ENCODE measurements at regions of chr14 and their contacts with region 1.

Region 1: DNA sequence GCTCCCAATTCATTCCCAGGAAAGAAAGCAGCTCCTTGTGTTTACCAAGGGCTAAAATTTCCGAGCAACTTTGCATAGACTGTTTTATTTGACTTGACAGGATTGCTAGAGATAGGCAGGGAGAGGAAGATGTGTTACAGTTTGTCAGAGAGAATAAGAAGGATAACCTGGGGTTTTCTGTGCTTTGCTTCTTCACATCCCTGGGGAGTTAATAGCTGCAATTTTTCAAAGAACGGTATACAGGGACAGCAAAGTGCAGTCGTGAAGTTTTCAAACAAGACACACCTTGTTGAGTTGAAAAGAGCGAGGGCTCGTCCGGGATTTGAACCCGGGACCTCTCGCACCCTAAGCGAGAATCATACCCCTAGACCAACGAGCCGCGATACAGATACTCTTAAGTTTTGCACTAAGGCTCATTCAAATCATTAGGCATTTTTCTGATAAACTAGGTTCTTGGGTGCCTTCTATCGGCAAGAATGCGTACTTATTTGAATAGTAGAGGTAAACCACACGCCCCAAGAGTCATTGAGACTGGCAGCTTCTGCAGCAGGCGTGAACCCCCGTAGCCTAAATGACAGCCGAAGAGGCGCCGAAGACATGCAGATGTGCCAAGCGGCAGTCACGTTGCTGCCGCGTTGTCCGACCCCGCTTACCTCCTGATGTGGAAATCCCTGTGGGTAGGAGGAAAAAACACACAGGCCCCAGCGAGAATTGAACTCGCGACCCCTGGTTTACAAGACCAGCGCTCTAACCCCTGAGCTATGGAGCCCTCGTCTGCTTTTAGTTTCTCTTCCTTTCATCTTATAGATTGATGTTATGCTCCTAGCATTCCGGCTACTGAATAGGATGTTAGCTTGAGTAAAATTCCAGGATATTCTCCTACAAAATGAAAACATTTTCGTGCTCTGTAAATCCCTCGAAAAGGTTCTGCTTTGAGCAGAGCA is 22.2 kb upstream of the RNASE12 start:
- DNase-seq: peak; percentile 90
- H3K4me3 Mint-ChIP-seq: no peak overlapping the region
- H3K27ac Mint-ChIP-seq: no peak overlapping the region
- H3K4me1 Mint-ChIP-seq: peaks cover 11% of the 10 kb centered on the region
- H3K27me3 Mint-ChIP-seq: no peaks in the 10 kb centered on the region

Region 2: DNA sequence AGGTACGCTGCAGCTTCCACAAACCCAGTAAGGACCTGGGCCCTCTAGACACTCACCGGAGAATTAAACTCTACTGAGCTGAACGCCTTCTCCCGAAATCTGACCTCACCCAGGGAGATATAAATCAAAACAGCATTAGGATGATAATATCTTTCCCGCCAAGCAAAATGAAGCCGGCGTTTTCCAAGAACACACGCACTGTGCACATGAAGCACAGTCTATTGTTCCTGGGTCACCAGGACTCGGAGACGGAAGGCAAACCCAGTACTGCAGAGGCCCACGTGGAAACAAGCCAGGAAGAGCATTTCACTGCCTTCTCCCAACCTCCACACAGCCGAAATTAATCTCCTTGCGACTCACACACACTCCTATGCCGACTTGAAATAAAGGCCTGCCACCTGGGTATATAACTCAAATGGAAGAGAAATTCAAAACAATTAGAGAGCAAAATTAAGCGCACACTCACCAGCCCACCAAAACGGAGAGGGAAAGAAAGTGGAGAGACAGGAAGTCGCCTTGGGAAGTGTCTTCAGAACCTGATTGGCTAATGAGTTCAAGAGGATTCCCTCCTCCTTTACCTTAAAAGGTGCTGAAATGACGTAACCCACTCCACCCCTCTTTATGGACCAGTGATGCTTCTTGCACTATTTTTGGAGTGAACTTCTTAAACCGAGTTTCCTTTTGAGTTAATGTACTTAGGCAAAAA is 280.4 kb before region 1 on chr14 and contains the start of gene CCNB1IP1:
- CTCF ChIA-PET with region 1: interaction called, 64 read pairs
- POLR2A ChIA-PET with region 1: no interaction called
- intact Hi-C with region 1: no loop called
- DNase-seq: peak; percentile 54
- H3K4me3 Mint-ChIP-seq: peak within 1 kb of the TSS; percentile 99
- H3K27ac Mint-ChIP-seq: peak within 1 kb of the TSS; percentile 92
- H3K4me1 Mint-ChIP-seq: peaks cover 36% of the 10 kb centered on the region
- H3K27me3 Mint-ChIP-seq: no peaks in the 10 kb centered on the region
- total RNA-seq, gene CCNB1IP1: 70.2 to 77.4 TPM

Region 3: DNA sequence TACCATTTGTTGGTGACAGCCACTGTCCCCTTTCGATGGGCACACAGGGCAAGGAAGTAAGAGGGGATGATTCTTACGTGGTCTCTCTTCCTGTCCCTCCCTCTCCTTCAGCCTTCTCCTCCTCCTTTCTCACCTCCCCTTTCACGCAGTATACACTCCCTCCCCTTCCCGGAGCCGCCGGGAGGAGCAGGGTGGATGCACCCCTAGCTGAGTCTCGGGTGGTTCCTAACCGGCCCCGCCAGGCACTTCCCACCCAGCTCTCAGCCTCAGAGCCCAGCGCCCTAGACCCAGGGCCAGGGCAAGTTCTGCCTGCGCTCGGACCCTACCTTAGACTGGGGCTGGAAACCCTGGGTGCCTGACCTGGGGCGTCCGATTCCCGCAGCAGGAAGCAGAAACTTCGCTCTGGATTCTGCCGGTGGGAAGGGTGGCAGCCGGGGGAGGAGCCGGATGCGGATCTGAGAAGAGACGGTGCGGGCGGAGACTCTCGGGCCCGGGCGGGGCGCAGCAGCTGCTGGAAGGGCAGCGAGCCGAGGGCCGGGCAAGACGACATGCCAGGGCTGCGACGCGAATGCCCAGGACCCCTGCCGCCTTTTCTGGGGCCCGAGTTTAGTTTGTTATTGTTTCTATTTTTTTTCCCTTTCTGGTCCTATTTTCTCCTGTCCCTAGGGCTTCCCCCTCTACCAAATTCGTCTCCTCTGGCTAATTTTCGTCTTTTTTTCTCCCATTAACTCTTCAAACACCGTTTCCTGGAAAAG is 200.1 kb before region 1 on chr14 and contains the start of gene TEP1:
- CTCF ChIA-PET with region 1: interaction called, 8 read pairs
- POLR2A ChIA-PET with region 1: interaction called, 3 read pairs
- intact Hi-C with region 1: loop called (anchors 2 kb)
- DNase-seq: peak; percentile 87
- H3K4me3 Mint-ChIP-seq: peak within 1 kb of the TSS; percentile 93
- H3K27ac Mint-ChIP-seq: peak within 1 kb of the TSS; percentile 96
- H3K4me1 Mint-ChIP-seq: peaks cover 40% of the 10 kb centered on the region
- H3K27me3 Mint-ChIP-seq: no peaks in the 10 kb centered on the region
- total RNA-seq, gene TEP1: 47.1 to 49.3 TPM

Region 4: DNA sequence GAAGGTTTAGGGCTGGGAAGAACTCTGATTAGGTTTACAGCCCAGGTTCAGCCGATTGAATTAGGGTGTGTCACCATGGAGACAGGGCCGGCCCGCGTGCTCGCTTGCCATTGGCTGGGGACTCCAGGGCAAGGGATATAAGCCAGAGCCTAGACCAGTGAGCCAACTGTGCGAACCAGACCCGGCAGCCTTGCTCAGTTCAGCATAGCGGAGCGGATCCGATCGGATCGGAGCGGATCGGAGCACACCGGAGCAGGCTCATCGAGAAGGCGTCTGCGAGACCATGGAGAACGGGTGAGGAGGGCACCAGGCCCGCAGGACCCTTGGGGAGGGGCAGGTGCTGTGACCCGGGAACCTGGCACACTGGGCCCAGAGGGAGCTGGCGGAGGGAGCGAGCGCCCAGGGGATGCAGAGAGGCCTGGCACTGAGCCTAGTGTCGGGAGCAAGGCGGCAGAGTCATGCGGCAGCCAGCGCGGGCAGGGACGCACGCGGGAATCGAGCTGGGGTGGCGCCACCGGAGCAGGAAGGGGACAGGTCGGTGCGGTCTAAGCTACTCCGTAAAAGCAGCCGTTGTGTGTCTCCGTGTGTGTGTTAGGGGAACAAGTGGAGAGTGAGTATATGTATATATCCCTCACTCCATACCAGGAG is 144.0 kb before region 1 on chr14 and contains the start of gene PNP:
- CTCF ChIA-PET with region 1: interaction called, 3 read pairs
- POLR2A ChIA-PET with region 1: interaction called, 4 read pairs
- intact Hi-C with region 1: loop called (anchors 1 kb)
- DNase-seq: peak; percentile 93
- H3K4me3 Mint-ChIP-seq: peak within 1 kb of the TSS; percentile 89
- H3K27ac Mint-ChIP-seq: peak within 1 kb of the TSS; percentile 99
- H3K4me1 Mint-ChIP-seq: peaks cover 39% of the 10 kb centered on the region
- H3K27me3 Mint-ChIP-seq: no peaks in the 10 kb centered on the region
- total RNA-seq, gene PNP: 178 to 179 TPM

Region 5: GRCh38 chr14:20624495-20625070 is 11.2 kb after region 1 on chr14:
- CTCF ChIA-PET with region 1: interaction called, 8 read pairs
- POLR2A ChIA-PET with region 1: interaction called, 9 read pairs
- intact Hi-C with region 1: loop called (anchors 1 kb)
- DNase-seq: peak; percentile 64
- H3K4me3 Mint-ChIP-seq: peak overlapping the region; percentile 75
- H3K27ac Mint-ChIP-seq: peak overlapping the region; percentile 81
- H3K4me1 Mint-ChIP-seq: peaks cover 55% of the 10 kb centered on the region
- H3K27me3 Mint-ChIP-seq: peaks cover 45% of the 10 kb centered on the region

Region 6: GRCh38 chr14:20682435-20683124 is 69.2 kb after region 1 on chr14:
- CTCF ChIA-PET with region 1: interaction called, 31 read pairs
- POLR2A ChIA-PET with region 1: interaction called, 6 read pairs
- intact Hi-C with region 1: loop called (anchors 1 kb)
- DNase-seq: peak; percentile 85
- H3K4me3 Mint-ChIP-seq: no peak overlapping the region
- H3K27ac Mint-ChIP-seq: no peak overlapping the region
- H3K4me1 Mint-ChIP-seq: peaks cover 27% of the 10 kb centered on the region
- H3K27me3 Mint-ChIP-seq: no peaks in the 10 kb centered on the region

Region 7: GRCh38 chr14:20873370-20874177 is 260.2 kb after region 1 on chr14:
- CTCF ChIA-PET with region 1: no interaction called
- POLR2A ChIA-PET with region 1: no interaction called
- intact Hi-C with region 1: loop called (anchors 5 kb)
- DNase-seq: peak; percentile 91
- H3K4me3 Mint-ChIP-seq: peak overlapping the region; percentile 13
- H3K27ac Mint-ChIP-seq: no peak overlapping the region
- H3K4me1 Mint-ChIP-seq: peaks cover 15% of the 10 kb centered on the region
- H3K27me3 Mint-ChIP-seq: no peaks in the 10 kb centered on the region